ENCODE measurements at regions of chr20 and their contacts with region 1.

Region 1: DNA sequence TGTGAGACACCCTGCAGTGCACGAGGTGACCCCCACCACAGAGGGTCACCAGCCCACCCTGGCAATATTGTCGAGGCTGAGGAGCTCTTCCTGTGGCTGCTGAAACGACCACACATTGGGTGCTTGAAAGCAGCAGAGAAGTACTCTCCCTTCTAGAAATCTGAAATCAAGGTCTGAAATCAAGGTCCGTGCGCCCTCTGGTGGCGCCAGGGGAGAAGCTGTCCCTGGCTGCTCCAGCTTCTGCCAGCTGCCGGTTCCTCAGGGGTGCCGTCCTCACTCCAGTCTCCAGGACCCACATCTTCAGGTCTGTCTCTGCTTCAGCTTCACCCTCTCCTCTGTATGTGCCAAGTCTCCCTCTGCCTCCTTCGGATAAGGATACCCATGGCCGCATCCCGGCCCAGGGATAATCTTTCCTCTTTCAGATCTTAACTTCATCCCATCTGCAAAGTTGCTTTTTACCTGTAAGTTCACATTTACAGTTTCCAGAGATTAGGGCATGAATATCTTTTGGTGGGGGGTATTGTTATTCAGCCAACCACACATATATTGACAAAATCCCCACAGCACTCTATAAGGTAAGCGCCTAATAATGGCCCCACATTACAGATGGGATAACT is 108.3 kb upstream of the PHACTR3 start:
- DNase-seq: peak; percentile 70
- ATAC-seq: peak; percentile 65
- H3K4me3 ChIP-seq: no peak overlapping the region
- H3K4me3 Mint-ChIP-seq: no peak overlapping the region
- H3K27ac ChIP-seq: no peak overlapping the region
- H3K27ac Mint-ChIP-seq: no peak overlapping the region
- H3K4me1 ChIP-seq: no peaks in the 10 kb centered on the region
- H3K4me1 Mint-ChIP-seq: no peaks in the 10 kb centered on the region
- H3K27me3 ChIP-seq: peaks cover 0 to 11% (median 0%) of the 10 kb centered on the region in 4 experiments
- H3K27me3 Mint-ChIP-seq: peaks cover 23% of the 10 kb centered on the region
- CTCF ChIP-seq: peak; percentile 96

Region 2: DNA sequence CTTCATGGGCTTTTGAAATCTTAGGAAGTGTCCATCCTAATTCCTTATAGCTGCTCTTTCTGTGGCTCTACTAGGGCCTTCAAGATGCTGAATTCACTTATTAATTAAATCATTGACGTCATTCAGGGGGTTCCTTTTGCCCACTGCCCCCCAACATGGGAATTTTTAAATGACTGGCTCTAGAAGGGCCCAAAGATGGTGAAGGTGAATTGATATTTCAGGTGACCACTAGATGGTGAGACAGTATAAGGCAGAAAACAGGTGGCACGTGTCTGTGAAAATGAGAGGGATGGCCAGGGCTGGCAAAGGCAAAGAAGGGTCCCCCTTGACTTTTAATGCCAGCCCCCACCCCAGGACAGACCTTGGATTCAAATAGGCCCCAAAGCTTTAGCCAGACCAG is 631.7 kb before region 1 on chr20:
- CTCF ChIA-PET with region 1: interaction called, 58 read pairs
- POLR2A ChIA-PET with region 1: no interaction called
- intact Hi-C with region 1: no loop called
- DNase-seq: peak; percentile 48
- ATAC-seq: no peak
- H3K4me3 ChIP-seq: no peak overlapping the region
- H3K4me3 Mint-ChIP-seq: no peak overlapping the region
- H3K27ac ChIP-seq: no peak overlapping the region
- H3K27ac Mint-ChIP-seq: no peak overlapping the region
- H3K4me1 ChIP-seq: peaks cover 0 to 2% of the 10 kb centered on the region in 2 donors
- H3K4me1 Mint-ChIP-seq: no peaks in the 10 kb centered on the region
- H3K27me3 ChIP-seq: peaks cover 0 to 10% (median 3%) of the 10 kb centered on the region in 4 experiments
- H3K27me3 Mint-ChIP-seq: peaks cover 22% of the 10 kb centered on the region
- CTCF ChIP-seq: peak; percentile 55

Region 3: DNA sequence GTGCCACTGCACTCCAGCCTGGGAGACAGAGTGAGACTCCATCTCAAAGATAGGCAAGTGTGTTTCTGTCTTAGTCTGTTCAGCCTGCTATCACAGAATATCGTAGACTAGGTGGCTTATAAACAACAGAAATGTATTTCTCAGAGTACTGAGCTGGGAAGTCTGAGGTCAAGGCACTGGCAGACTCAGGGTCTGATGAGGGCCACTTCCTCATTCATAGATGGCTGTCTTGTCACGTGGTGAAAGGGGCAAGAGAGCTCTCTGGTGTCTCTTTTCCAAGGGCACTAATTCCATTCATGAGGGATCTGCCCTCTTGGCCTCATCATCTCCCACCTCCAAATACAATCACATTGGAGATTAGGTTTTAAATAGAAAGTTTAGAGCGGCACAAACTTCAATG is 12.7 kb after region 1 on chr20:
- CTCF ChIA-PET with region 1: interaction called, 16 read pairs
- POLR2A ChIA-PET with region 1: no interaction called
- intact Hi-C with region 1: no loop called
- DNase-seq: no peak
- ATAC-seq: no peak
- H3K4me3 ChIP-seq: no peak overlapping the region
- H3K4me3 Mint-ChIP-seq: no peak overlapping the region
- H3K27ac ChIP-seq: no peak overlapping the region
- H3K27ac Mint-ChIP-seq: no peak overlapping the region
- H3K4me1 ChIP-seq: no peaks in the 10 kb centered on the region
- H3K4me1 Mint-ChIP-seq: no peaks in the 10 kb centered on the region
- H3K27me3 ChIP-seq: peaks cover 0 to 3% (median 0%) of the 10 kb centered on the region in 4 experiments
- H3K27me3 Mint-ChIP-seq: peaks cover 15% of the 10 kb centered on the region
- CTCF ChIP-seq: no peak

Region 4: DNA sequence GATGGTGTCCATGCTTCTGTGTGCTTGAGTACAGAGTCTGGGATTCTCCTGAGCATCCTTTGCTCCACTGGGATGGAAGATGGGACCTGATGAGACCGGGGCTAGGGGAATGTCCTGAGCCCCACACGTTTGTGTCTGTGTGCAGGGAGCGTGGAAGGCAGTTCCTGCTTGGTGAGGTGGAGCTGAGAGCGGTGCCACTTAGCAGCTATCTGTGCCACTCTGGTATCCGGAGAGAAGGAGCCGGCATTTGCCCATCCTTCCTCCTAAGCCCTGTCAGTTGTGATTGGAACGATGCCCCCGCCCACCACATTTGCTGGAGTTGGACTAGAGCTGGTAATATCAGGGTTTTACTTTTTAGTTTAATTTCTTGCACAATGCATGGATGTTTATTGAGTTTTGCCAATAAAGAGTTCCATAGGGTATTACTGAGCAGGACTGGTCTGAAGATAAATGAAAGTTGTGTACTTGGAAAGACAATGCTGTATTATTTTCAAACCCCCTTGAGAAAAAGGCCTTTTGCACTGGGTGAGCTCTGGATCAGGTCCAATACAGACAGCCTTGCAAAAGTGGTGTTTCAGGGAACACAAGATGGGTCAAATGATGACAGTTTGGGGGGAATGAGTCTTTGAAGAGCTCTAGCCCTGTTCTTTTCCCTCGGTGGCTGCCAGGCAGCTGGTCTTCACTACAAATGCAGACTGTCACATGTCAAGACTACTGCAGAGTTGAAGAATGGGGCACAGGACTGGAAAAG is 306.6 kb after region 1 on chr20:
- CTCF ChIA-PET with region 1: no interaction called
- POLR2A ChIA-PET with region 1: no interaction called
- intact Hi-C with region 1: no loop called
- DNase-seq: no peak
- ATAC-seq: no peak
- H3K4me3 ChIP-seq: no peak overlapping the region
- H3K4me3 Mint-ChIP-seq: no peak overlapping the region
- H3K27ac ChIP-seq: no peak overlapping the region
- H3K27ac Mint-ChIP-seq: no peak overlapping the region
- H3K4me1 ChIP-seq: no peaks in the 10 kb centered on the region
- H3K4me1 Mint-ChIP-seq: no peaks in the 10 kb centered on the region
- H3K27me3 ChIP-seq: no peaks in the 10 kb centered on the region
- H3K27me3 Mint-ChIP-seq: peaks cover 11% of the 10 kb centered on the region
- CTCF ChIP-seq: no peak

Measured in B cell (primary cell).